Transverse colon (tissue), 4 donors: ENCODE measurements at regions of chr9 and their contacts with region 1.

Region 1: DNA sequence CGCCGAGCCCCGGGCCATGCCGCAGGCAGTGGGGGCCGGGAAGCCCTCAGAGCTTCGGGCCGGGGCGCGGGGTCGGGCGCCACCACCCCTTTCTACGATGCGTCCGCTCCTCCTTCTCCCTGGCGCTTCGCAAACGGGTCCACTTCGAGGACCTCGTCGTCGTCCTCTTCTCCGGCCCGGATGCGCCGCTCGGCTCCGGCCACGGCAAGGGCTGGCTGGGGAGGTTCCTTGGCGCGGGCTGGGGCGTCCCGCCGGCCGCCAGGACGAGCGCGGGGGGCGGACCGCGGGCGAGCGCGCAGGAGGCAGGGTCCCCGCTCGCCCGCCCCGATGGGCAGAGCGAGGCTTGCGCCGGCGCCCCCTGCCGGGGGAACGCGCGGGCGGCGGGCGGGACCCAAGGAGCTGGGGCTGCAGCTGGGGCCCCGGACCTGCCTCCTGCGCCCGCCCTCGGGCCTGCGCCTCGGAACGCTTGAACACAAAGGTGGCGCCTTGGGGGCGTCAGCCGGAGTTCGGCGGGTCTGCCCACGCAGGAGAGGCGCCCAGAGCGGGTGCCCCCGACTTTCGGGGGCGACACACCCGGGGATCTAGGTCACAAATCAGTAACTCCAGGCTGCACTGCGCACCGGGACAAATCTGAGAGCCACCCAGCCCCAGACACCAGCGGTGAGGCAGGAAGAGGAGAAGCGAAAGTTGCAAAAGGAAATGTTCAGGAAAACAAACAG is at the start of gene ROR2:
- DNase-seq: peak; percentile 75
- H3K4me3 ChIP-seq: peak within 1 kb of the TSS; percentile 49 to 91 (median 59)
- H3K27ac ChIP-seq: peak within 1 kb of the TSS; percentile 81 to 94 (median 88)
- H3K4me1 ChIP-seq: peaks cover 5 to 42% (median 31%) of the 10 kb centered on the region in 4 donors
- H3K27me3 ChIP-seq: peaks cover 62% of the 10 kb centered on the region
- CTCF ChIP-seq: peak; percentile 26 to 61 (median 48)
- EP300 ChIP-seq: no peak
- POLR2A ChIP-seq: no peak
- total RNA-seq, gene ROR2: 4.2 to 23.2 (median 11.2) TPM

Region 2: DNA sequence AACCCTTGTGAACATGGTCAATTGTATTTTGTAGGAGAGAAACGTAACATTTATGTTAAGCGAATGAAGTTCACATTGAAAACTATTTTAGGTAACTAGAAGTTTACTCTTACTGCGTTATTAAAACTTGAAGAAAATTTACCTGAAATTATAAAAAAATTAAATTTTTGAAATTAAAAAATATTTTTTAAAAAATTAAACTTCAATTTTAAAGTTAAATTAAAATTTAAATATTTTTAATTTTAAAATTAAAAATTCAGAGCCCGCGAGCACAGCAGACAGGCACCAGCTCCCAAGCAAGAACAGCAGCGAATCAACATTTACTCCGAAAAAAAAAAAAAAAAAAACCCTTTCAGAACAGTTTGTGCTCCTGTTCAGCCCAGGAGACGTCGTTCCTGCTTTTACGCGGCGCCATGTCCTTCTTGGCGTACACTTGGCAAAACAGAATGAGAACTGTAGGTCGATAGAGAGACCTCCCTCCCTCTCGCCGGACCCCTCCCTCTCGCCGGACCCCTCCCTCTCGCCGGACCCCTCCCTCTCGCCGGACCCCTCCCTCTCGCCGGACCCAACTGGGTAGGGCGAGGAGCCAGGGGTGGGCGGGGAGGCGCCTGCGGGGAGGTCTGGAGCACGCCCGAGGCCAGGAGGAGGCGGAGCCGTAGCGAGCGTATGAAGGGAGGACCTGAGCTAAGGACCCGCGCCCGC is 235.9 kb before region 1 on chr9:
- in situ Hi-C with region 1: no loop called
- intact Hi-C with region 1: no loop called
- DNase-seq: peak; percentile 78
- H3K4me3 ChIP-seq: peak overlapping the region in 3 of 4 donors; percentile 9 to 40 (median 30)
- H3K27ac ChIP-seq: peak overlapping the region in 3 of 4 donors; percentile 45 to 50 (median 48)
- H3K4me1 ChIP-seq: no peaks in the 10 kb centered on the region
- H3K27me3 ChIP-seq: no peaks in the 10 kb centered on the region
- CTCF ChIP-seq: no peak
- EP300 ChIP-seq: no peak
- POLR2A ChIP-seq: no peak

Region 3: GRCh38 chr9:91758491-91758981 is 191.6 kb before region 1 on chr9:
- in situ Hi-C with region 1: loop called in 1 of 4 experiments (anchors 25 kb)
- intact Hi-C with region 1: no loop called
- DNase-seq: peak; percentile 54
- H3K4me3 ChIP-seq: no peak overlapping the region
- H3K27ac ChIP-seq: no peak overlapping the region
- H3K4me1 ChIP-seq: peaks cover 0 to 17% (median 8%) of the 10 kb centered on the region in 4 donors
- H3K27me3 ChIP-seq: no peaks in the 10 kb centered on the region
- CTCF ChIP-seq: peak; percentile 43 to 61 (median 51)
- EP300 ChIP-seq: no peak
- POLR2A ChIP-seq: no peak

Region 4: DNA sequence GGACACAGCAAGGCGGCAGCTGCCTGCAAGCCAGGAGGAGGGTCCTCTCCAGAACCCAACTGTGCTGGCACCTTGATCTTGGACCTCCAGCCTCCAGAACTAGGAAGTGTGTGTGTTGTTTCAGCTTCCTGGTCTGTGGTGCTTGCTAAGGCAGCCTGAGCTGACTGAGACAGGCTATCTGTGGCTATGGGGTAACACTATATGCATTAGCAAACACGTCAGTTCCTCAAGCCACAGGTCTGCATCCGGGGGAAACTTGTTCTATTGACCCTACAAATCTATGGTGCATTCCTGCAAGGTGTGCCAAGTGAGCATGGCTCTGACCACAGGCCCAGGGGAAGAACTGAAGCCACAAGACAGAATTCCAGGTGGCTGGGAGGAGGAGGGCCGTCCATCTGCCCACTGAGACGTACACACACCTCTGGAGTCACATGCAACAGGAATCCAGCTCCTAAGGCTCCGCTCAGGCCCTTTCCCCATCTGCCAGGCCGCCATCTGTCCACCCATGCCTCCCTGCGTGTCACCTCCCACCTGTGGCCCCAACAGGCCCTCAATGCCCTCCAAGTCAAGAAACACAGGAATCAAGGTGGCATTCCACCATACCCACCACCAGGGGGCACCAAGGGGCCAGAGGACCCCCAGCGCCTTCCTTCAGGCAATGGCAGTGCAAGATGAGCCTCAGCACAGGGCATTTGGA is 174.9 kb before region 1 on chr9:
- in situ Hi-C with region 1: loop called in 2 of 4 experiments (anchors 10 to 25 kb)
- intact Hi-C with region 1: no loop called
- DNase-seq: peak; percentile 76
- H3K4me3 ChIP-seq: no peak overlapping the region
- H3K27ac ChIP-seq: peak overlapping the region in 3 of 4 donors; percentile 28 to 71 (median 66)
- H3K4me1 ChIP-seq: peaks cover 9 to 40% (median 24%) of the 10 kb centered on the region in 4 donors
- H3K27me3 ChIP-seq: no peaks in the 10 kb centered on the region
- CTCF ChIP-seq: peak; percentile 72 to 87 (median 78)
- EP300 ChIP-seq: no peak
- POLR2A ChIP-seq: no peak

Region 5: DNA sequence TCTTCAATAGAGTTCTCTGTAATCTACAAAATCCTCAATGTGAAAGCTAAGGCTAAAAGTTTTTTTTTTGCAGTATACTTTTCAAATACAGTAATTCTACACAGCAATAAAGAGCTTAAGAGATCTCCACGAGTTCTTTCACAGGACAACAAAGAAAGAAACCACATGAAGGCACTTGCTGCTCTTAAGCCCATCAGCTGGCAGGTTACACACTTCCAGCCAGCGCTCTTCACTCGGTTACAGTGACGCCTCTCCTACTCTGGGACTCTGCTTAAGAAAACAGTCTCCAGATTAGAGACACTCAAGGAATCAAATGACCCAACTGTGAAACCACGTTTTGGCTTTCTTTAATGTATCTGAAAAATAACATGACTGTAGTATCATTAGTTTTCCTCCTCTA is 85.1 kb before region 1 on chr9:
- in situ Hi-C with region 1: no loop called
- intact Hi-C with region 1: no loop called
- DNase-seq: no peak
- H3K4me3 ChIP-seq: no peak overlapping the region
- H3K27ac ChIP-seq: peak overlapping the region; percentile 16 to 32 (median 24)
- H3K4me1 ChIP-seq: peaks cover 0 to 10% (median 0%) of the 10 kb centered on the region in 4 donors
- H3K27me3 ChIP-seq: no peaks in the 10 kb centered on the region
- CTCF ChIP-seq: no peak
- EP300 ChIP-seq: no peak
- POLR2A ChIP-seq: no peak

Region 6: DNA sequence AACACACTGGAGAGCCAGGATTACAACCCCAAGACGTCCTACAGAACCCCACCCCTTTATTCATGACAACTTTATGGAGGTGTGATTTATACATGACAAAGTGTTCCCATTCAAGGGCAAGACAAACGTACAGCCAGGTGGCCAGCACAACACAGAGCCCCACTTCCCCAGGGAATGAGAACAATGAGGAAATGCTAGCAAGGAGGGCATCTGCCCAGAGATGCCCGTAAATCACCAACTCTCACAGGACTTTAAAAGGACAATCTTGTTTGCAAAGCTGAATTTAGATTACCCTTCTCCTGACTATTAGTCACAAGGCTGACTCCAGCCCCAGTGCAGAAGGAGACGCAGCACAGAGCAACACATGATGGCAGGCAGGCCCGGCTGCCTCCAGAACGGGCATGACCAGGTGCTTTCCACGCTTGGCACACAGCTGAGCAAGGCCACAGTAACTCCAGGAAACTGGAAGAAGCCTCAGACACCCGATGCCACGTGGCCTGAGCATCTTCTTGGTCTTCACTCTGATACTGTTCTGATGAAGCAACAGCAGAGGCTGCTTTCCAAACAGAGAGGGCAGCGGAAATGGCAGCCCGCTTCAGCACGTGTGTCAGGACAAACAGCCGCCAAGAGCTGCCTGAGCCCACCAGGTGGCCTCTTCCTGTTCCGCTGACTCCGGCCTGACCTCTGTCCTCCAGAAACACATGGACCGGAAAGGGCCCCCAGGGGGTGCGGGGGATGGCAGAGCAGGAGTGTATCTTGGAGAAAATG is 51.5 kb before region 1 on chr9:
- in situ Hi-C with region 1: no loop called
- intact Hi-C with region 1: loop called (anchors 10 kb)
- DNase-seq: peak; percentile 37
- H3K4me3 ChIP-seq: no peak overlapping the region
- H3K27ac ChIP-seq: peak overlapping the region; percentile 51 to 78 (median 73)
- H3K4me1 ChIP-seq: peaks cover 34 to 72% (median 49%) of the 10 kb centered on the region in 4 donors
- H3K27me3 ChIP-seq: no peaks in the 10 kb centered on the region
- CTCF ChIP-seq: no peak
- EP300 ChIP-seq: peak; percentile 70
- POLR2A ChIP-seq: peak; percentile 13

Region 7: DNA sequence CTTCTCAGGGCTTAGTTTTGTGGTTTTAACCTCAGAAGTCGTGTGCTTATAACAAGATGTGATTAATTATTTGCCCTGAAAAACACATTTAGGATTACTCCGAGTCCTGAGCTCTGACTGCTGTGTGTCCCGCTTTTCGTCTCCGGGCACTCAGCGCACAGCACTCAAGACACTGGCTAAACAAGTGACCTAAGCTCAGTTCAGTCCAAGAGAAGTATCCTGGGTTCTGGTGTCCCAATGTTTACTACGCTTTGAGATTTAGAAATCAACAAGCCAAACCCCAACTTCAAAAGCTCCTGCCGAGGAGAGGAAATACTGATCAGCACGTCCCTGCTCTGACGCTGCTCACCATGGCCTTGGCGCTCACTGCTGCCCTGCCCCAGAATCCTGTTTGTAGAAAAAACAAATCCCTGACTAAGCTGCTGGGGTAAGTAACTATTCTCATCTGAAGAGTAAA is 666.6 kb after region 1 on chr9:
- in situ Hi-C with region 1: no loop called
- intact Hi-C with region 1: no loop called
- DNase-seq: no peak
- H3K4me3 ChIP-seq: no peak overlapping the region
- H3K27ac ChIP-seq: peak overlapping the region; percentile 61 to 87 (median 73)
- H3K4me1 ChIP-seq: peaks cover 0 to 42% (median 7%) of the 10 kb centered on the region in 4 donors
- H3K27me3 ChIP-seq: no peaks in the 10 kb centered on the region
- CTCF ChIP-seq: no peak
- EP300 ChIP-seq: no peak
- POLR2A ChIP-seq: no peak

Region 8: GRCh38 chr9:92860867-92861266 is 910.8 kb after region 1 on chr9:
- in situ Hi-C with region 1: no loop called
- intact Hi-C with region 1: no loop called
- DNase-seq: no peak
- H3K4me3 ChIP-seq: no peak overlapping the region
- H3K27ac ChIP-seq: no peak overlapping the region
- H3K4me1 ChIP-seq: no peaks in the 10 kb centered on the region
- H3K27me3 ChIP-seq: no peaks in the 10 kb centered on the region
- CTCF ChIP-seq: no peak
- EP300 ChIP-seq: no peak
- POLR2A ChIP-seq: no peak